AG04450 (cell line): ENCODE measurements at regions of chr1 and their contacts with region 1.

Region 1: GRCh38 chr1:32521165-32521564 is 18.1 kb upstream of the ZBTB8A start:
- DNase-seq: no peak
- H3K4me3 ChIP-seq: no peak overlapping the region
- H3K27ac ChIP-seq: no peak overlapping the region
- H3K27me3 ChIP-seq: no peaks in the 10 kb centered on the region
- CTCF ChIP-seq: no peak

Region 2: DNA sequence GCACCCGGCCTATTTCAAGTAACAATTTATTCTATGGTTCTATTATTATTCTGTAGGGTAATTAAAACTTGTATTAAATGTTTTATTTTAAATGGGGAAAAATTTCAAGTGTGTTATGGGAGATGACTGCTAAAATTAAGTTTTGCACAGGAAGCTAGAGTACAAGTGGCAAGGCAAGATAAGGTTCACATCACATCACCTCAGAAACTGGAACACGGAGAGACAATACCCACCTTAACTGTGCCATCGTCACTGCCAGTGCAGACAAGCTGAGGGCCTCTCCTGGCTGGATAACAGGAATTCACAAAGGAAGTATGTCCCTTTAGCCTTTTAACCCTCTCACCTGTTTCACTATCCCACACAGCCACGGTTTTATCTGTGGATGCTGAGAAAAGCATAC is 1232.1 kb before region 1 on chr1:
- CTCF ChIA-PET with region 1: no interaction called
- POLR2A ChIA-PET with region 1: no interaction called
- DNase-seq: no peak
- H3K4me3 ChIP-seq: no peak overlapping the region
- H3K27ac ChIP-seq: no peak overlapping the region
- H3K27me3 ChIP-seq: no peaks in the 10 kb centered on the region
- CTCF ChIP-seq: no peak

Region 3: DNA sequence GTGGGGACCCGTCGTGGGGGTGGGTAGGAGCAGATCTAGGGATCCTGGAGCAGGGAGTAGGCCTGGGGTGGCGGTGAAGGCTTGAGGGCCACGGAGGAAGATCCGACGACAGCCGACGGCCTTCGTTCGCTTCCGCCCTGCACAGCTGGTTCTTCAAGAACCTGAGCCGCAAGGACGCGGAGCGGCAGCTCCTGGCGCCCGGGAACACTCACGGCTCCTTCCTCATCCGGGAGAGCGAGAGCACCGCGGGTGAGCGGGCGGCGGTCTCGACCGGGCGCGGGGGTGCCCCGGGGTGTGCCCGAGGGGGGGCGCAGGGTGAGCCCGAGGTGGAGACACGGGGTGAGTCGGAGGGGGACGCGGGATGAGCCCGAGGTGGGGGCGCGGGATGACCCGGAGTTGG is 245.7 kb before region 1 on chr1:
- CTCF ChIA-PET with region 1: interaction called, 11 read pairs
- POLR2A ChIA-PET with region 1: no interaction called
- DNase-seq: no peak
- H3K4me3 ChIP-seq: no peak overlapping the region
- H3K27ac ChIP-seq: no peak overlapping the region
- H3K27me3 ChIP-seq: peaks cover 31% of the 10 kb centered on the region
- CTCF ChIP-seq: no peak

Region 4: DNA sequence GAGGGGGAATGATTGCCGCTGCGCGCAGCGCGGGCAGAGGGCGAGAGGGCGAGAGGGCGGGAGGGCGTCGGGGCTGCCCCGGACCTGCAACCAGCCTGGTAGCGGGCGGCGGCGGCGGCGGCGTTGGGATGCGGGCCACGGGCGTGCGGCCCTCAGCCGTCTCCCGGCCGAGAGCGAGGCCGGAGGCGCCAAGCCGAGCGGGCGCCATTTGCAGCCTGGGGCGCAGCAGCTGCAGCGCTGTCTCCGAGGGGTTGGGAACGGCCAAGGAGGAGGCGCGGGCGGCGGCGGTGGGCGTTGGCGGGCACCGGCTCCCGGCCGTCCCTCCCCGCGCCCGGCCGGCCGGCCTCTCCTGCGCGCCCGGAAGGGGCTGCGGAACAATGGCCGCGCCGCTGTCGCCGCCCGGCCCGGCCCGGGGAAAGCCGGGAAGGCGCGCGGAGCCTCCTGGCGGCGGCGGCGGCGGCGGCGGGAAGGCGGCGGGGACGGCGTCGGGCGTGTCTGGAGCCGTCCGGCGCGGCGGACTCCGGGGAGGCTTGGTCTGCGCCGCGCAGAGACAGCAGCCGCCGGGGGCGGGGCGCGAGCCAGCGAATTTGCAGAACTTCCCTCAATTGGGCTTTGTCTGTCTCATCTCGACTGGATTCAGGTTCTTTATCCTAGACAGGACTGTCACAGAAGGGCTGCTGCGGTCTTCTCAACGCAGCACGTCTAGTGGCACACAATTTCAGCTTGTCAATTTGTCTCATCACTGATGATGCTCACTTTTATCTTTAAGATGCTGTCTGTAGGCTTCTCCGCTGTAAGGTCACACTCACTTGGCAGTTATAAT is 20.6 kb before region 1 on chr1:
- CTCF ChIA-PET with region 1: interaction called, 11 read pairs
- POLR2A ChIA-PET with region 1: no interaction called
- DNase-seq: no peak
- H3K4me3 ChIP-seq: peak overlapping the region; percentile 62
- H3K27ac ChIP-seq: peak overlapping the region; percentile 3
- H3K27me3 ChIP-seq: no peaks in the 10 kb centered on the region
- CTCF ChIP-seq: no peak

Region 5: GRCh38 chr1:32538887-32539583 is 17.9 kb after region 1 on chr1 and contains the start of gene ZBTB8A:
- CTCF ChIA-PET with region 1: interaction called, 46 read pairs
- POLR2A ChIA-PET with region 1: interaction called, 6 read pairs
- DNase-seq: no peak
- H3K4me3 ChIP-seq: peak within 1 kb of the TSS; percentile 68
- H3K27ac ChIP-seq: peak within 1 kb of the TSS; percentile 47
- H3K27me3 ChIP-seq: peaks cover 9% of the 10 kb centered on the region
- CTCF ChIP-seq: no peak
- polyA plus RNA-seq, gene ZBTB8A: 5.0 and 7.2 TPM in 2 replicates

Region 6: GRCh38 chr1:32773018-32773763 is 252.0 kb after region 1 on chr1:
- CTCF ChIA-PET with region 1: interaction called, 13 read pairs
- POLR2A ChIA-PET with region 1: interaction called, 3 read pairs
- DNase-seq: peak; percentile 47
- H3K4me3 ChIP-seq: no peak overlapping the region
- H3K27ac ChIP-seq: no peak overlapping the region
- H3K27me3 ChIP-seq: peaks cover 2% of the 10 kb centered on the region
- CTCF ChIP-seq: peak; percentile 97